Activated naive CD8-positive, alpha-beta T cell treated with anti-CD3 and anti-CD28 coated beads, Interleukin-2, amount 10 ng/mL, durations not matched to agents 7 days and 5 days (primary cell): ENCODE measurements at regions of chr10 and their contacts with region 1.

Region 1: GRCh38 chr10:30433730-30434272 is at the start of gene MAP3K8:
- DNase-seq: peak; percentile 86
- ATAC-seq: peak; percentile 74
- H3K4me3 Mint-ChIP-seq: peak within 1 kb of the TSS; percentile 87
- H3K27ac Mint-ChIP-seq: peak within 1 kb of the TSS; percentile 87
- H3K4me1 Mint-ChIP-seq: peaks cover 48% of the 10 kb centered on the region
- H3K27me3 Mint-ChIP-seq: no peaks in the 10 kb centered on the region
- total RNA-seq, gene MAP3K8: 27.7 to 28.3 TPM

Region 2: GRCh38 chr10:30413996-30414576 is 19.7 kb before region 1 on chr10:
- POLR2A ChIA-PET with region 1: interaction called, 13 read pairs
- DNase-seq: no peak
- ATAC-seq: peak; percentile 28
- H3K4me3 Mint-ChIP-seq: no peak overlapping the region
- H3K27ac Mint-ChIP-seq: no peak overlapping the region
- H3K4me1 Mint-ChIP-seq: peaks cover 33% of the 10 kb centered on the region
- H3K27me3 Mint-ChIP-seq: no peaks in the 10 kb centered on the region

Region 3: DNA sequence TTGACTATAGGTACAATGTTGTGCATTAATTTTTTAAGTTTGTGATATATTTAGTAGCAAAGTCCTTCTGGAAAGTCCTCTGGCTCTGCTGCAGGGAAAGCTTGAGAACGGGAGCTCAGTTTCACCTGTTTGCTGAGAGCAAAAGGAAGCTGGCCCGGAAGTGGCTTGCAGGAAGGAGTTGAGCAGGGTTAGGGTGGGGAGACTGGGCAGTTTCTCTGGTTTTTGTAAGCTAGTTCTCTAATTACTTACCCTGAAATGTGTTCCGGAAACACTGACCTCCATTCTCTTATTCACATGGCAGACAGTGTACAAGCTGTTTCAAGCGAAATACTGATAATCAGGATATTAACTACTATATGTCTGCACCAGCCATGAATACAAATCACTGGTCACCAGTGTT is 22.5 kb after region 1 on chr10:
- POLR2A ChIA-PET with region 1: interaction called, 28 read pairs
- DNase-seq: peak; percentile 45
- ATAC-seq: peak; percentile 82
- H3K4me3 Mint-ChIP-seq: peak overlapping the region; percentile 74
- H3K27ac Mint-ChIP-seq: peak overlapping the region; percentile 88
- H3K4me1 Mint-ChIP-seq: peaks cover 29% of the 10 kb centered on the region
- H3K27me3 Mint-ChIP-seq: no peaks in the 10 kb centered on the region

Region 4: GRCh38 chr10:30493609-30494530 is 60.1 kb after region 1 on chr10:
- POLR2A ChIA-PET with region 1: interaction called, 15 read pairs
- DNase-seq: no peak
- ATAC-seq: no peak
- H3K4me3 Mint-ChIP-seq: peak overlapping the region; percentile 56
- H3K27ac Mint-ChIP-seq: peak overlapping the region; percentile 76
- H3K4me1 Mint-ChIP-seq: peaks cover 70% of the 10 kb centered on the region
- H3K27me3 Mint-ChIP-seq: peaks cover 5% of the 10 kb centered on the region

Region 5: GRCh38 chr10:30502266-30503060 is 68.7 kb after region 1 on chr10:
- POLR2A ChIA-PET with region 1: interaction called, 15 read pairs
- DNase-seq: peak; percentile 62
- ATAC-seq: peak; percentile 98
- H3K4me3 Mint-ChIP-seq: peak overlapping the region; percentile 75
- H3K27ac Mint-ChIP-seq: peak overlapping the region; percentile 94
- H3K4me1 Mint-ChIP-seq: peaks cover 72% of the 10 kb centered on the region
- H3K27me3 Mint-ChIP-seq: no peaks in the 10 kb centered on the region

Region 6: DNA sequence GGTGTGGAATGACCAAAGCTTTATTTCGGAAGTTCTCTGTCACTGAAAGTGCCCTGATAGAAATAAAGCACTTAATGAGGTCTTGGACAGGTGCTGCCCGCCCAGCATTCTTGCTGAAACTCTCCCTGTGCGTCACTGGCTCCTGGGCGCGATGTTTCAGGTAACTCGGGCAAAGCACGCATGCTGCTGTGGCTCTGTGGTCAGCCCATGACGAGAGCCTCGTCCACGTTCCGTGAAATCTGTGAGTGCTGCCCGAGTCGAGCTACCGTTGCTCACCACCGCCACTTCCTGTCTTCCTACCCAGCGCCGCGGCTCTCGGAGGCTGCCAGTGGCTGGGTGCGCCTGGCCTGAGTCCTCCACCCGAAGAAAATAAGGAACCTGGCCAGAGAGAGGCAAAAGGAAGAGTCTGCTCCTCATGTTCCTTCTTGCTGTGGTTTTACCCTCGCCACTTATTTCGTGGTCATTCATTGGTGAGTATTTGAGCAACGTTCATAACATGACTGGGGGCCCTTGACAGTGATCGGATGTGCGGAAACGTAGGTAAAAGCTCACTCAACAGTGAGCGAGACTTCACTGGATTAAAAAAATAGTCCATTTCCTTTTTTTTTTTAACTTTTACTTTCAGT is 95.7 kb after region 1 on chr10:
- POLR2A ChIA-PET with region 1: interaction called, 69 read pairs
- DNase-seq: peak; percentile 86
- ATAC-seq: peak; percentile 87
- H3K4me3 Mint-ChIP-seq: peak overlapping the region; percentile 85
- H3K27ac Mint-ChIP-seq: peak overlapping the region; percentile 99
- H3K4me1 Mint-ChIP-seq: peaks cover 65% of the 10 kb centered on the region
- H3K27me3 Mint-ChIP-seq: no peaks in the 10 kb centered on the region

Region 7: DNA sequence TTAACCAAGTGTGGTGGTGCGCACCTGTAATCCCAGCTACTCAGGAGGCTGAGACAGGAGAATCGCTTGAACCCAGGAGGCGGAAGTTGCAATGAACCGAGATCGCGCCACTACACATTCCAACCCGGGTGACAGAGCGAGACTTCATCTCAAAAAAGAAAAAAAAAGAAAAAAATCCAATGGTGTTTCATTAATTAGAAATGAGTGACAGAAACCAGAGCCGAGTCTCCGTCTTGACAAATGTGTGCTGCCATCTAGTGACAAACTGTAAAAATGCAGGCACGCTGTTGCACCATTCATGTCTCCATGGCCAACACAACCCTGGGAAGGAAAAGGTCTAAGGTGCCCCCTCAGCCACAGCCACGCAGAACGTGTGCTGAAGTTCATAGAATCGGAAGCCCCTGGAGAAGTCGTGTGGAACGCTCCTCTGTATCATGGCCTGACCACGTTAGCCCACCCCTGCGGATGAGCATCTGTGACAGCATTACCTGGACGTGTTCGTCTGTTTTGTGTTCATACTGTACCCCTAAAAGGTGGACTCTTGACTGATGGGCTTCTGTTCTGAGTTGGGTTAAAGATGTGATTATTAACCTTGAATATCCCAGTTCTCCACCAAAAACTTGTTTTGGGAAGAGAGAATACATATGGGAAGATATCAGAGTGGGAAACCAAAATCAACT is 100.8 kb after region 1 on chr10:
- POLR2A ChIA-PET with region 1: interaction called, 69 read pairs
- DNase-seq: peak; percentile 62
- ATAC-seq: no peak
- H3K4me3 Mint-ChIP-seq: no peak overlapping the region
- H3K27ac Mint-ChIP-seq: peak overlapping the region; percentile 31
- H3K4me1 Mint-ChIP-seq: peaks cover 40% of the 10 kb centered on the region
- H3K27me3 Mint-ChIP-seq: no peaks in the 10 kb centered on the region